Stomach (tissue), 19 donors: ENCODE measurements at regions of chr18 and their contacts with region 1.

Region 1: DNA sequence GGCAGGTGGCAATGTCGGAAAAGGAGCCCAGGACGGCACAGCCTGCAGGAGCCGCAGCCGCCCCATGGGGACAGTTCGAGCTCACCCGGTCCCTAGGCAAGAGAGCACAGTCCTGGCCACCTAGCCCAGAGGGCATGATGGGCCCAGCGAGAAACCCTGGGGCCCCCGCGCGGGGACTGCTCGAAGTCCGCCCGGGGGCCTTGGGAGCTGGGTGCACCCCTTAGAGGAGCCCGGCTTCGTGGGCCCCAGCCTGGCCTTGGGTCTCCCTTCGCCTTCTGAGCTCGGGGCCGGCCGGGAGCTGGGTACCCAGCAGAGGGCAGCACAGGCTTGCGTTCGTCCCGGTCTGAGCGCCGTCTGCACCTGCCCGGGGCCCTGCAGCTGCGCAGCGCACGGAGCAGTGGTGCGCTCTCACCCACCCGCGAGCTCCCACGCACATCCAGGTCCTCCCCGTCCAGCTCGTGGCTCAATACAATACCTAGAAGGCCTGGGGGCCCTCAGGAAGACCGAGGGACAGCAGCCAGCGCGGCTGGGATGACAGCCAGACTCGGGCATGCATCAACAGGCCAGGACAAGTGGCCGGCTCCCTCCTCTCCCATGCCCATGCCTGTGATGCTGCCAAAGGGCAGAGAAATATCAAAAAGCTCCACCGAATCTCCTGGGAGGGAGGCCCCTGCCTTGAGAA is 96.2 kb upstream of the ZNF532 start:
- DNase-seq: peak; percentile 84 to 92
- H3K4me3 ChIP-seq: peak overlapping the region; percentile 22 to 35 (median 29)
- H3K27ac ChIP-seq: no peak overlapping the region
- H3K4me1 ChIP-seq: peaks cover 0 to 19% (median 11%) of the 10 kb centered on the region in 4 donors
- H3K27me3 ChIP-seq: peaks cover 0 to 25% (median 0%) of the 10 kb centered on the region in 3 donors
- CTCF ChIP-seq: peak in 5 of 7 experiments; percentile 60 to 85 (median 63)
- EP300 ChIP-seq: no peak
- POLR2A ChIP-seq: no peak

Region 2: GRCh38 chr18:58669731-58670378 is 98.6 kb before region 1 on chr18:
- intact Hi-C with region 1: loop called (anchors 10 kb)
- DNase-seq: peak in 1 of 2 donors; percentile 13
- H3K4me3 ChIP-seq: no peak overlapping the region
- H3K27ac ChIP-seq: peak overlapping the region in 2 of 5 donors; percentile 92 to 98
- H3K4me1 ChIP-seq: peaks cover 10 to 41% (median 22%) of the 10 kb centered on the region in 4 donors
- H3K27me3 ChIP-seq: peaks cover 0 to 12% (median 0%) of the 10 kb centered on the region in 3 donors
- CTCF ChIP-seq: no peak
- EP300 ChIP-seq: no peak
- POLR2A ChIP-seq: no peak